CD8-positive, alpha-beta T cell (primary cell): ENCODE measurements at regions of chr14 and their contacts with region 1.

Region 1: GRCh38 chr14:21257394-21257909 is 11.8 kb downstream of the HNRNPC start:
- DNase-seq: peak in 1 of 9 experiments; percentile 42
- ATAC-seq: peak; percentile 18
- H3K4me3 ChIP-seq: peak overlapping the region in 1 of 2 experiments; percentile 29
- H3K4me3 Mint-ChIP-seq: peak overlapping the region; percentile 72
- H3K27ac ChIP-seq: peak overlapping the region; percentile 15 to 41
- H3K27ac Mint-ChIP-seq: peak overlapping the region; percentile 81
- H3K4me1 ChIP-seq: peaks cover 79% of the 10 kb centered on the region
- H3K4me1 Mint-ChIP-seq: peaks cover 79% of the 10 kb centered on the region
- H3K27me3 ChIP-seq: no peaks in the 10 kb centered on the region
- H3K27me3 Mint-ChIP-seq: no peaks in the 10 kb centered on the region
- CTCF ChIP-seq: no peak

Region 2: DNA sequence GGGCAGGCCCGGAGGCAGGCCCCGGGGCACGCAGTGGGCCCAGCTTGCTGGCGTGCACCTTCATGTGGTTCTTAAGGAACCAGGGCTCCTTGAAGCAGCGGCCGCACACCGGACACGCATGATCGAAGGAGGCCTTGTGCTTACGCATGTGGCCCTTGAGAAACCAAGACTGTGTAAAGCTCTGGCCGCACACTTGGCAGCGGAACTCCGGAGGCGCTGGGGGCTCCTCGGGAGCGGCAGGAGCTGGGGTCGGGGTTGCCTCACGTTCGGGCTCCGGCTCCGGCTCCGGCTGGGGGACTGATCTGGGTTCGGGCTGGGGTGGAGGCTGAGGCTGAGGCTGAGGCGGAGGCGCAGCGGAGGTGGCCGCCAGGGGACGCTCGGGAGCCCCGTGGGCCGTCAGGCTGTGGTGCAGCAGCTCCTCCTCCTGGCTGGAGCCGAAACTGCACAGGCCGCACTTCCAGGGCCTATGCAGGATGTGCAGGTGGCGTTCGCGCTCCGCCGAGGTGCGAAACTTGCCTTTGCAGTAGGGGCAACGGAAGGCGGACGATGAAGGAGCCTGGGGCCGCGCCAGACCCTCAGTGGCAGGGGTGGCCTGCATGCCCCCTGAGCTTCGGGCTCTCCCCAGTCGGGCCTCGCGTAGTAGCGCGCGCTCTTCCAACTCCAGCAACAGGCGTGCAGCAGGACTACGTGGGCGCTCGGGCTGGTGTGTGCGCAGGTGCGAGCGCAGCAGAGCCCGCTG is 165.0 kb before region 1 on chr14:
- CTCF ChIA-PET with region 1: no interaction called
- POLR2A ChIA-PET with region 1: no interaction called
- intact Hi-C with region 1: no loop called
- DNase-seq: peak; percentile 86 to 97 (median 92)
- ATAC-seq: peak; percentile 89
- H3K4me3 ChIP-seq: no peak overlapping the region
- H3K4me3 Mint-ChIP-seq: no peak overlapping the region
- H3K27ac ChIP-seq: no peak overlapping the region
- H3K27ac Mint-ChIP-seq: peak overlapping the region; percentile 71
- H3K4me1 ChIP-seq: peaks cover 18% of the 10 kb centered on the region
- H3K4me1 Mint-ChIP-seq: peaks cover 28% of the 10 kb centered on the region
- H3K27me3 ChIP-seq: no peaks in the 10 kb centered on the region
- H3K27me3 Mint-ChIP-seq: no peaks in the 10 kb centered on the region
- CTCF ChIP-seq: peak; percentile 100

Region 3: GRCh38 chr14:21197418-21198205 is 59.8 kb before region 1 on chr14:
- CTCF ChIA-PET with region 1: no interaction called
- POLR2A ChIA-PET with region 1: no interaction called
- intact Hi-C with region 1: no loop called
- DNase-seq: peak in 1 of 9 experiments; percentile 3
- ATAC-seq: no peak
- H3K4me3 ChIP-seq: no peak overlapping the region
- H3K4me3 Mint-ChIP-seq: no peak overlapping the region
- H3K27ac ChIP-seq: no peak overlapping the region
- H3K27ac Mint-ChIP-seq: no peak overlapping the region
- H3K4me1 ChIP-seq: no peaks in the 10 kb centered on the region
- H3K4me1 Mint-ChIP-seq: peaks cover 4% of the 10 kb centered on the region
- H3K27me3 ChIP-seq: no peaks in the 10 kb centered on the region
- H3K27me3 Mint-ChIP-seq: no peaks in the 10 kb centered on the region
- CTCF ChIP-seq: no peak

Region 4: GRCh38 chr14:21220874-21221477 is 36.5 kb before region 1 on chr14:
- CTCF ChIA-PET with region 1: interaction called, 3 read pairs
- POLR2A ChIA-PET with region 1: no interaction called
- intact Hi-C with region 1: loop called (anchors 5 to 10 kb)
- DNase-seq: no peak
- ATAC-seq: peak; percentile 33
- H3K4me3 ChIP-seq: no peak overlapping the region
- H3K4me3 Mint-ChIP-seq: peak overlapping the region; percentile 27
- H3K27ac ChIP-seq: peak overlapping the region in 1 of 2 experiments; percentile 9
- H3K27ac Mint-ChIP-seq: peak overlapping the region; percentile 83
- H3K4me1 ChIP-seq: peaks cover 46% of the 10 kb centered on the region
- H3K4me1 Mint-ChIP-seq: peaks cover 72% of the 10 kb centered on the region
- H3K27me3 ChIP-seq: no peaks in the 10 kb centered on the region
- H3K27me3 Mint-ChIP-seq: no peaks in the 10 kb centered on the region
- CTCF ChIP-seq: no peak

Region 5: GRCh38 chr14:21308479-21309237 is 51.2 kb after region 1 on chr14:
- CTCF ChIA-PET with region 1: no interaction called
- POLR2A ChIA-PET with region 1: interaction called, 10 read pairs
- intact Hi-C with region 1: no loop called
- DNase-seq: peak; percentile 42 to 87 (median 73)
- ATAC-seq: peak; percentile 87
- H3K4me3 ChIP-seq: peak overlapping the region; percentile 42 to 44
- H3K4me3 Mint-ChIP-seq: peak overlapping the region; percentile 73
- H3K27ac ChIP-seq: peak overlapping the region; percentile 16 to 62
- H3K27ac Mint-ChIP-seq: peak overlapping the region; percentile 60
- H3K4me1 ChIP-seq: peaks cover 7% of the 10 kb centered on the region
- H3K4me1 Mint-ChIP-seq: peaks cover 17% of the 10 kb centered on the region
- H3K27me3 ChIP-seq: no peaks in the 10 kb centered on the region
- H3K27me3 Mint-ChIP-seq: no peaks in the 10 kb centered on the region
- CTCF ChIP-seq: no peak